Calu3 (cell line): ENCODE measurements at regions of chr20 and their contacts with region 1.

Region 1: DNA sequence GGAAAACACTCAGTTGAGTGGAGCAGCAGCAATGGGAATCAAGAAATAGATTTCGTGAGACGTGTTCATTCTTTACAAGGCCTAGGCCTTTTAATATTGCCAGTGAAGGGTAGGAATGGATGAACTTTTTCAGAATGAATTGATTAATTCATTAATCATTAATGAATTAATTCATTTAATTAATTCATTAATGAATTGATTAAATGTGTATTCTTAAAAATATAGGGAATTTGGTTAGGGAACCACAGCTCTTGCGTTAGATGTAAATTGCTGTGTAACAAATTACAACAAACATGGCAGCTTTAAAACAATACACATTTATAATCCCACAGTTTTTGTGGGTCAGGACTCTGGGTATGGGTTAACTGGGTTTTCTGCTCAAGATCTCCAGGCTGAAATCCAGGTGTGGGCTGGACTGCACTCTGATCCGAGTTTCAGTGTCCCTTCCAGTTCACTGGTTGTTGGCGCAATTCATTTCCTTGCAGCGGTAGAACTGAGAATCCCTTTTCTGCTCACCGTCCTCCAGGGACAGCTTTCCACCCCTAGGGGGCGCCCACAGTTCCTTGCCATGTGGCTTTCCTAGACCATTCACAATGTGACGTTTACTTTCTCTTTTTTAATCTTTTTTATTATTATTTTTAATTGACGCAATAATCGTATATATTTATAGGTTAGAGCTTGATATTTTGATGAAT is 32.8 kb upstream of the BCAS1 start:
- DNase-seq: peak; percentile 99
- H3K4me3 Mint-ChIP-seq: no peak overlapping the region
- H3K27ac Mint-ChIP-seq: peak overlapping the region; percentile 75
- H3K4me1 Mint-ChIP-seq: peaks cover 73% of the 10 kb centered on the region
- H3K27me3 Mint-ChIP-seq: no peaks in the 10 kb centered on the region
- CTCF ChIP-seq: peak; percentile 95

Region 2: DNA sequence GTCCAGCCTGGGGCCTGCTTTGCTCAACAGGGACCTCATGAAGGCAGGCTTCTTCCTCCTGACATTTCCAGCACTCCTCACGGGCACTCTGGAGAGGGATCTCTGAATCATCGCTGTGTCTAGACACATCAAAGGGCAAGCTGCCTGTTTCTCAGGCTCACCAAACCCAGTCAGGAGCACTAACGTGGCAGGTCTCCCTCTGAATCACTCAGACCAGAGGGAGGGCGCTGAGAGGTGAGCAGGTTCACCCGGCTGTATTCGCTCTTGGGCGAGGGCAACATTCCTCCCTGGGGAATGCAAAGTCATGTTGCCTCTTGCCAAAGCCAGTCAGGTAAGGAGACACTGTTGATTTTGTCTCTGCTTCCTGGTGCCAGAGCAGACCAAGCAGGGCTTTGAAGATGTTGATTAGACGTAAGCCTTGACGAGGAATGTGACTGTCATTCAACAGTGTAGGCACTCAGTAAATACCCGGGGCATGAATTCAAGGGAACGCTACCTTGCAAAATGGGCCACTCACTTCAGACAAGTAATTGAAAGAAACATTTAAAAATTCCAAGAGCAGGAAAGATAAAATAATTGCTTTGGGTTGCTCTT is 20.5 kb after region 1 on chr20:
- CTCF ChIA-PET with region 1: interaction called, 8 read pairs
- intact Hi-C with region 1: loop called (anchors 1 kb)
- DNase-seq: peak; percentile 99
- H3K4me3 Mint-ChIP-seq: peak overlapping the region; percentile 33
- H3K27ac Mint-ChIP-seq: peak overlapping the region; percentile 96
- H3K4me1 Mint-ChIP-seq: peaks cover 75% of the 10 kb centered on the region
- H3K27me3 Mint-ChIP-seq: no peaks in the 10 kb centered on the region
- CTCF ChIP-seq: no peak

Region 3: DNA sequence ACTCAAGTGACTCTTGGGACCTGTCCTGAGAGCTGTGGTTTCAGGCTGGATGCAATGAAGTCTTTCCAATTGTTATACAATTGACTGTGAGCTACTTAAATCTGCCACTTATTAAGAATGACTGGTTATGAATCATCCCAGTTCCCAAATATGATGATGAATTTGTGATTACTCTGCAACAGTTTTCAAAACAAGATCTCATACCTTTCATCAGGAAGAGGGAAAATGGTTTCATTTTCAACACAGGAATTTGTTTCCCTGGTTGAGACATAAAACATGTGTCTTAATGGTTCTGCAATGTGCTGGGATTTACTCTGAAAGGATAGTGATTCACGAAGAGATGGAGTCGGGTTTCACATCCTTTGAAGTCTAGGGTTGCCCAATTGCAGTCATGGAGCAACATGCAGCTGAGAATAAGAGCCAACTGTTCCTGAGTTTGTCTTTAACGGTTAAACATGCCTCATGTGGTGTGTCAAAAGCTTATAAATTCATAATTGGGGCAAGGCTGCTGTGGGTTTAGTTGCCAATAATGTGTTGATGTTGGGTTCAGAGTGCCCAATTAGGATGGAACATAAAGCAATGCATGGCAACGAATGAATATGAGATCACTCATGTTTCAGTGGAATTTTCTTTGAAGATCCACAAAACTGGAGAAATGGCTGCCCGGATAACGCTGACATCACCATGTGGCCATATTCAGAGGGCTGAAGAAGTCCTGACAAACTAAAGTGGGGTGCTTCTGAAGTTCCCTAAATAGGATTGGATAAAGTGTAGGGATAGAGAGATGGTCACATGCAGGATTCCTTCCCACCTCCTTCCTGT is 29.6 kb after region 1 on chr20:
- CTCF ChIA-PET with region 1: interaction called, 12 read pairs
- intact Hi-C with region 1: loop called (anchors 1 kb)
- DNase-seq: peak; percentile 77
- H3K4me3 Mint-ChIP-seq: no peak overlapping the region
- H3K27ac Mint-ChIP-seq: no peak overlapping the region
- H3K4me1 Mint-ChIP-seq: peaks cover 10% of the 10 kb centered on the region
- H3K27me3 Mint-ChIP-seq: no peaks in the 10 kb centered on the region
- CTCF ChIP-seq: no peak

Region 4: GRCh38 chr20:54167909-54168872 is 65.0 kb after region 1 on chr20:
- CTCF ChIA-PET with region 1: interaction called, 15 read pairs
- intact Hi-C with region 1: loop called (anchors 2 kb)
- DNase-seq: peak; percentile 85
- H3K4me3 Mint-ChIP-seq: peak overlapping the region; percentile 43
- H3K27ac Mint-ChIP-seq: peak overlapping the region; percentile 83
- H3K4me1 Mint-ChIP-seq: peaks cover 63% of the 10 kb centered on the region
- H3K27me3 Mint-ChIP-seq: no peaks in the 10 kb centered on the region
- CTCF ChIP-seq: no peak

Region 5: DNA sequence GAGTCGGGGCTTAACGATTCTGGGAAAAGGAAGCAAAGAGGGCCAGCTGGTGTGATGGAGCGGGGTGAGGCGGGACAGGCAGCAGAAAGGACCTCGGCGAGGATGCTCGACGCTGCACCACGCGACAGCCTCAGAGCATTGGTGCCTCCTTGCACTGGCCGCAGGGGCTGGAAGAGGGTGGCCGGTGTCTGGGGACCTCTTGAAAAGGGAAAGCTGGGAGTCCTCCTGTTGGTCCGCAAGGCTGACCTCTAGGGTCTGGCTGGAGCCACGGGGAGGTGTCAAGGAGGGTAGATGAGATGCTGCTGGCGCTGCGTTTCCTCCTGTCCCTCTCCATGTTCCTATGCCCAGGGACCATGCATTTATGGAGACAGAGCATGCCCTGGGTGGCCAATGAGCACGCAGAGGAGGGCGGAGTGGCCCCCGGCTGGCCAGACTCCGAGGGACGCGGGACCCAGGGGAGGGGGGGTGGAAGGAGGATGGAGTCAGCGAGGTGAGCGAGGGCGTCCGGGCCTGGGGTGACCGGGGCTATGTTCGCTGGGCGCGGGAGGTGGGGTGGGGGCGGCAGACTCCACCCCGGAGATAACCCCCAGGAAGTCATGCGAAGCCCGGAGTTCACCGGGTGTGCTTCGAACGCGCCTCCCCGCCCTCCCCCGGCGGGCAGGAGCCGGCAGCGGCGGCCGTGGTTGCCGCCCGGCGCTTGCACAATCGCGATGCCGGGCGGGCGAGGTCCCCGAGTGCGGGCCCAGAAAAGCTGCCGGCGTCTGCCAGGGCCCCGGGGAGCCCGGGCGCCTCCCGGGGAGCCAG is 70.6 kb after region 1 on chr20 and contains the start of gene CYP24A1:
- CTCF ChIA-PET with region 1: interaction called, 15 read pairs
- intact Hi-C with region 1: loop called (anchors 2 kb)
- DNase-seq: peak; percentile 96
- H3K4me3 Mint-ChIP-seq: peak within 1 kb of the TSS; percentile 86
- H3K27ac Mint-ChIP-seq: peak within 1 kb of the TSS; percentile 90
- H3K4me1 Mint-ChIP-seq: peaks cover 65% of the 10 kb centered on the region
- H3K27me3 Mint-ChIP-seq: no peaks in the 10 kb centered on the region
- CTCF ChIP-seq: no peak
- total RNA-seq, gene CYP24A1: 393 and 665 TPM in 2 replicates

Region 6: GRCh38 chr20:54179946-54180345 is 76.7 kb after region 1 on chr20:
- CTCF ChIA-PET with region 1: interaction called, 10 read pairs
- intact Hi-C with region 1: no loop called
- DNase-seq: no peak
- H3K4me3 Mint-ChIP-seq: no peak overlapping the region
- H3K27ac Mint-ChIP-seq: peak overlapping the region; percentile 57
- H3K4me1 Mint-ChIP-seq: peaks cover 72% of the 10 kb centered on the region
- H3K27me3 Mint-ChIP-seq: no peaks in the 10 kb centered on the region
- CTCF ChIP-seq: no peak

Region 7: DNA sequence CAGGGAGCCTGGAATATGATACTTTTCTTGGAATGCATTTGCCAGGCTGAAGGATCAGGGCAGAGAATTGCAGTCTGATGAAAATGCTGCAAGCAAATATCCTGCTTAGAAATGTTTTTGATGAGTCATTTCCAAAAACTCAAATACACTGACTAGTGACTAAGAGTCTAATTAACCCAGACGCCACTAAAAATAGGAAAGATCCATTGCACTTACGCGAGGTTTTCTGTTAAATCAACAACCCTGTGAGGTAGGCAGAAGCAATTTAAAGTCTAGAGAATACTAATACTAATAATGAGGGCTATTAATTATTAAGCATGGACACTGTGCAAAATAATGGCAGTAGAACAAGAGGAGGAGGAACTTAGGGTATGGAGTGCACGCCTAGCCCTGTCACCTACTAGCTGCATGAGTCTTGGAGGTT is 242.1 kb after region 1 on chr20:
- CTCF ChIA-PET with region 1: no interaction called
- intact Hi-C with region 1: loop called (anchors 10 kb)
- DNase-seq: peak; percentile 16
- H3K4me3 Mint-ChIP-seq: peak overlapping the region; percentile 9
- H3K27ac Mint-ChIP-seq: peak overlapping the region; percentile 55
- H3K4me1 Mint-ChIP-seq: peaks cover 65% of the 10 kb centered on the region
- H3K27me3 Mint-ChIP-seq: no peaks in the 10 kb centered on the region
- CTCF ChIP-seq: no peak